ENCODE measurements at regions of chr7 and their contacts with region 1.

Region 1: GRCh38 chr7:45157653-45158401 is at the start of gene RAMP3:
- DNase-seq: no peak
- H3K4me3 ChIP-seq: peak within 1 kb of the TSS; percentile 18
- H3K27ac ChIP-seq: no peak within 1 kb of the TSS
- H3K4me1 ChIP-seq: no peaks in the 10 kb centered on the region
- H3K27me3 ChIP-seq: no peaks in the 10 kb centered on the region
- CTCF ChIP-seq: no peak
- EP300 ChIP-seq: no peak
- POLR2A ChIP-seq: no peak
- total RNA-seq, gene RAMP3: 2.9 to 26.0 (median 8.0) TPM

Region 2: DNA sequence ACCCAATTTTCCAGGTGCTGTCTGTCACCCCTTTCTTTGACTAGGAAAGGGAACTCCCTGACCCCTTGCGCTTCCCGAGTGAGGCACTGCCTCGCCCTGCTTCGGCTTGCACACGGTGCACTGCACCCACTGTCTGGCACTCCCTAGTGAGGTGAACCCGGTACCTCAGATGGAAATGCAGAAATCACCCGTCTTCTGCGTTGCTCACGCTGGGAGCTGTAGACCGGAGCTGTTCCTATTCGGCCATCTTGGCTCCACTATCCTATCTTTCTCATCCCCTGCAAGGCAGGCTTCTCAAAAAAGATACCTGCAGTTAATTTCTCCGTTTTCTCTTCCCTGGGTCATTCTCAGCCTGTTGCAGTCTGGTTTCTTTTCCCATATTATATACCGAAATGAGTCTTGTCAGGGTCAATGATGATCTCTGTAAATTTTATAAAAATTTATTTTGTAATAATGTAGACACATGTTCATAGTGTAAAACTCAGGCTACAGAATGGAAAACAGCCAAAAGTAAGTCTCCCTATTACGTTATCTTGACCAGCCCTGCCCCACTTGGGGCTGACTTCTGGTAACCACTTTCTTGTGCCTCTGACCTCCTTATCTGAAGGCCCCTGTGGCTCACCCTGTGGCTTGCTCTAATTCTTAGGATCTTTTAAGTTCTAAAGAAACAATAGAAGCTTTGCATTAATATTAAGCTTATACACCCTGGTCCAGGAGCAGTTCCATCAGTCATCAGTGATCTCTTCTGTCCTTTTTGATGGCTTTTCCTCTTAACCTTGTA is 1378.6 kb before region 1 on chr7:
- intact Hi-C with region 1: no loop called
- DNase-seq: no peak
- H3K4me3 ChIP-seq: no peak overlapping the region
- H3K27ac ChIP-seq: no peak overlapping the region
- H3K4me1 ChIP-seq: no peaks in the 10 kb centered on the region
- H3K27me3 ChIP-seq: no peaks in the 10 kb centered on the region
- CTCF ChIP-seq: no peak
- EP300 ChIP-seq: no peak
- POLR2A ChIP-seq: no peak

Region 3: DNA sequence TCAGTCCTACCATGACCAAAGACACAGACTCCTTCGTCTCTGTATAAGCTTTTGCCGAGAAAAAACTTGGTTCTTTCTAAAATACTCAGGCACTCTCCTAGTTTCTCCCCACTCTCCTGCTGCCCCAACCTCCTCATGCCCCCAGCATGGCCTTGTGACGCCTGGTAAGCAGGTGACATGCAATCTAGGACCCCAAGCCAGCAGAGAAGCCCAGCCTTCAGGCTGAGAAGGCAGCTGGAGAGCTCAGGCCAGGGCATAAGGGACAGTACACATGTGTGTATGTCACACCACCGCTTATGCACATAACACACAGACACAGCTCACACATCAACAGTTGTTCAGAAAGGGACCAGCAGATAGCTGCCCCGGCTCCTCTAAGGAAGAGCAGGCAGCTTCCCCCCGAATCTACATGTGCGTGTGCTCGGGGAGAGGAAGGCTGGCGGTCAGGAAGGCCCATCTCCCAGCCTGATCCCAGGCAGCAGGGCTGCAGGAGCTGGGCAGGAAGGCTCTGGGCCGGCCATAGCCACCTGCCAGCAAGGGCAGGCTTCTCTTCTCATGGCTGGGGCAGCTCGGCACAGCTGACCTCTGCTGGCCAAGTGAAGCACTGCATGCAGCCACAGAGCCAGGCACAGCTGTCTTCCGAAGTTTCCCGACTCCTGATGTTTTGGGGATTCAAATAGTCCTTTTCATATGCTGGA is 592.6 kb before region 1 on chr7:
- intact Hi-C with region 1: no loop called
- DNase-seq: peak; percentile 36 to 81 (median 68)
- H3K4me3 ChIP-seq: no peak overlapping the region
- H3K27ac ChIP-seq: no peak overlapping the region
- H3K4me1 ChIP-seq: no peaks in the 10 kb centered on the region
- H3K27me3 ChIP-seq: no peaks in the 10 kb centered on the region
- CTCF ChIP-seq: peak; percentile 75 to 86 (median 81)
- EP300 ChIP-seq: no peak
- POLR2A ChIP-seq: no peak

Region 4: GRCh38 chr7:45259966-45260646 is 102.3 kb after region 1 on chr7:
- intact Hi-C with region 1: loop called in 1 of 4 experiments (anchors 5 kb)
- DNase-seq: peak in 3 of 5 donors; percentile 32 to 47 (median 43)
- H3K4me3 ChIP-seq: no peak overlapping the region
- H3K27ac ChIP-seq: no peak overlapping the region
- H3K4me1 ChIP-seq: no peaks in the 10 kb centered on the region
- H3K27me3 ChIP-seq: no peaks in the 10 kb centered on the region
- CTCF ChIP-seq: peak in 1 of 3 donors; percentile 63
- EP300 ChIP-seq: no peak
- POLR2A ChIP-seq: no peak

Region 5: DNA sequence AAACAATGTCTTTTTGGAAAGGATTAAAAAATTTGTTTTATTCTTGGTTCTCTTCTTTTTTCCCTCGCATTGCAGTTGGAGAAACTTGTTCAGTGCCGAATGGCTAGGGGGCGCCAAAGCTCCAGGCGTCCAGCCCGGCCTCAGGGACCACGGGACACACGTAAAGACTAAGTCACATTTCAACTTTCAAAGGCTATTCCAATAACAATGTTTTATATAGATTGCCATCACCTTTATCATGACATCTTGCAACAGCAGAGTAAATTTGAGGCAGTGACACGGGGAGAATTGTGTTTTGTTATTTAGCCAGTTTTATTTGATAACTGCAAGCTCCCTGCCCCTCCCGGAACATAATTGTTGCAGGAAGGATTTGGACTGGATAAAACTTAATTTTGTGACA is 765.5 kb after region 1 on chr7:
- intact Hi-C with region 1: no loop called
- DNase-seq: peak; percentile 66 to 83 (median 81)
- H3K4me3 ChIP-seq: no peak overlapping the region
- H3K27ac ChIP-seq: no peak overlapping the region
- H3K4me1 ChIP-seq: peaks cover 4% of the 10 kb centered on the region
- H3K27me3 ChIP-seq: no peaks in the 10 kb centered on the region
- CTCF ChIP-seq: peak; percentile 53 to 80 (median 76)
- EP300 ChIP-seq: no peak
- POLR2A ChIP-seq: no peak

Region 6: GRCh38 chr7:46315891-46316290 is 1158.1 kb after region 1 on chr7:
- intact Hi-C with region 1: loop called in 1 of 4 experiments (anchors 5 kb)
- DNase-seq: no peak
- H3K4me3 ChIP-seq: no peak overlapping the region
- H3K27ac ChIP-seq: no peak overlapping the region
- H3K4me1 ChIP-seq: no peaks in the 10 kb centered on the region
- H3K27me3 ChIP-seq: no peaks in the 10 kb centered on the region
- CTCF ChIP-seq: no peak
- EP300 ChIP-seq: no peak
- POLR2A ChIP-seq: no peak

Measured in ovary (tissue), 10 donors.